Activated B cell treated with CpG ODN at 0.5 μM for 24 hours (primary cell): ENCODE measurements at regions of chr10 and their contacts with region 1.

Region 1: GRCh38 chr10:87861953-87862678 is 1.2 kb downstream of the KLLN start:
- DNase-seq: peak; percentile 93
- ATAC-seq: peak; percentile 68
- H3K4me3 Mint-ChIP-seq: peak overlapping the region; percentile 97
- H3K27ac Mint-ChIP-seq: peak overlapping the region; percentile 98
- H3K4me1 Mint-ChIP-seq: peaks cover 30% of the 10 kb centered on the region
- H3K27me3 Mint-ChIP-seq: no peaks in the 10 kb centered on the region
- CTCF ChIP-seq: no peak

Region 2: DNA sequence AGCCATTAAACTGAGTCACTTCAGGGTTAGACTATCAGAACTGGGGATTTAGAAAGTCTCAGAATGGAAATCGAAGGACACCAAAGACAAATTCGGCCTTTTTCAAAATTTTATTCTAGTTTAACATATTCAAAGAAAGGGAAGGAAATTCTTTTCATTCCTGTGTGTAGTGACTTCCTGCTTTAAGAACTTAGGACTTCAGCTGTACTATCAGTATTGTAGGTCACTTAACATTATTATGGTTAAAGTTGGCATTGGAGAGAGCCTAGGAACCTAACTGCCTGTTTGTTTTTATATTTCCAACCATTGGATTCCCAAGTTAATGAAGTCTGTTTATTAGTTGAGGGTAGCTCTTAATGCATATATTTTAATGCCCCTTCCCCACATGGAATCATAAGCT is 65.0 kb after region 1 on chr10:
- CTCF ChIA-PET with region 1: no interaction called
- POLR2A ChIA-PET with region 1: interaction called, 4 read pairs
- intact Hi-C with region 1: loop called (anchors 2 kb)
- DNase-seq: no peak
- ATAC-seq: no peak
- H3K4me3 Mint-ChIP-seq: no peak overlapping the region
- H3K27ac Mint-ChIP-seq: no peak overlapping the region
- H3K4me1 Mint-ChIP-seq: peaks cover 86% of the 10 kb centered on the region
- H3K27me3 Mint-ChIP-seq: no peaks in the 10 kb centered on the region
- CTCF ChIP-seq: no peak

Region 3: DNA sequence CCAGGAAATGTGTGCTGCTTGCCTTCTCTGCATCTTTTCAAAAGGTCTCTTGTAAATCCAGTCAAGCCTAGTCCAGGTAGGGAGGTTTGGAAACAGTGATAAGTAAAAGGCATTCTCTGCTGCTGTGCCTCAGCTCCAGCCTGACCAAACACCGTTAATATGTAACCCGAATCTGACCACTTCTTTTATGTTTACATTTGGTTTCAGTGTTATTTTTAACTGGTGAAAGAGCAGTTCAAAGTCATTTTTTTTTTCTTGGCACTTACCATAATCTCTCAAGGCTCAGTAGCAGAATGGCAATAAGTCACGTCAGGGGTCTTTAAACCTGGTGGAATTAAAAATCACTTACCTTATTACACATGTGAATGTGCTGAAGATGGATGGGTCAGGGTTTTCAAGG is 218.1 kb after region 1 on chr10:
- CTCF ChIA-PET with region 1: interaction called, 3 read pairs
- POLR2A ChIA-PET with region 1: interaction called, 13 read pairs
- intact Hi-C with region 1: no loop called
- DNase-seq: no peak
- ATAC-seq: no peak
- H3K4me3 Mint-ChIP-seq: peak overlapping the region; percentile 48
- H3K27ac Mint-ChIP-seq: peak overlapping the region; percentile 54
- H3K4me1 Mint-ChIP-seq: peaks cover 62% of the 10 kb centered on the region
- H3K27me3 Mint-ChIP-seq: no peaks in the 10 kb centered on the region
- CTCF ChIP-seq: no peak

Region 4: DNA sequence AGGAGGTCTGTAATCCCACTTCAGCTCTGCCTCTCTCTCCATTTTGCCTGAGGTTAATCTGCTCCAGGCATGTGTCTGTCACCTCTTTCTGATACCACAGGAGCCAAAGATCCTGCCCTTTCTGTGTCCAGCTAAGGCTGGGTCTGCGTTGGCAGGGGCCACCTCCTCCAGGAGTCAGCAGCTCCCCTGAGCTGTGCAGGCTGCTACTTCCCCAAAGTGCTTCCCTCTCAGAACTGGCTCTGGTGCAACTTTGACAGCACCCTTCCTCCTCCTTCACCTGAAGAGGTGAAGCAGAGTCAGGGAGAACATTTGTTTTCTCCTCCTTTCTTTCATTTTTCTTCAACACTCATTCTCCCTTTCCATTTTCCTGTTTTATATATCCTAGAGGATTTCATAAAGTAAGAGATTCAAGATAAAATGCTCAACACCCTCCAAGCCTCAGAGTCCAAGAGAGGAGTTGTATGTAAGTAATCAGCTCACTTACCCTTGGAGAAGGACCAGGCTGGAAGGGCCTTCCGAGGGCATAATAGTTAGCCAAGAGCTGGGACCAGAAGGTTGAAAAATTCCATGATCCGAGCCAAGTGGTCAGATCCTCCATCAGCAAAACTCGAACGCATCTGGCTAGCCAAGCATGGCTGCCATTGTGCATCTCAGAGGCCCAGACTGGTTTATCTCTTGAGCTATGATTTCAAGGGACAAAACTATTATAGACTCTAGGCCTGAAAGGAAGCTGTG is 258.6 kb after region 1 on chr10:
- CTCF ChIA-PET with region 1: interaction called, 14 read pairs
- POLR2A ChIA-PET with region 1: interaction called, 51 read pairs
- intact Hi-C with region 1: no loop called
- DNase-seq: no peak
- ATAC-seq: peak; percentile 53
- H3K4me3 Mint-ChIP-seq: peak overlapping the region; percentile 11
- H3K27ac Mint-ChIP-seq: no peak overlapping the region
- H3K4me1 Mint-ChIP-seq: peaks cover 20% of the 10 kb centered on the region
- H3K27me3 Mint-ChIP-seq: no peaks in the 10 kb centered on the region
- CTCF ChIP-seq: no peak

Region 5: DNA sequence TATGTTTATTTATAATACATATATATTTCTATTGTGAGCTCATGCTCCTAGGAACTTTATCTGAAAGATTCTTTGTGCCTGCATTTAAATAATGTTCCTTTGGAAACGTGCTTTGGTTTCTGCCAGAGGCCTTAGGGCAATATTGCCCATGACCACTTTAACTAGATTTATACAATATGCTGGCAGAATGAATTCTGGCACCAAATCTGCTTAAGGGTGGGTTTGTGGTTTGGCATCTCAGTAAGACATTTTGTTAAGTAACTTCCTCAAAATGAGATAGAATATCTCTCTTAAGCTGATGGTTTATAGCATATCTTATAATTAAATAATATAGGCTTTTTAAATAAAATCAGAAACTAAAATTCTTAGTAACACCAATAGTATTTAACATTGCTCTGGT is 468.1 kb after region 1 on chr10:
- CTCF ChIA-PET with region 1: no interaction called
- POLR2A ChIA-PET with region 1: interaction called, 4 read pairs
- intact Hi-C with region 1: loop called (anchors 5 kb)
- DNase-seq: no peak
- ATAC-seq: no peak
- H3K4me3 Mint-ChIP-seq: no peak overlapping the region
- H3K27ac Mint-ChIP-seq: no peak overlapping the region
- H3K4me1 Mint-ChIP-seq: peaks cover 45% of the 10 kb centered on the region
- H3K27me3 Mint-ChIP-seq: no peaks in the 10 kb centered on the region
- CTCF ChIP-seq: no peak

Region 6: DNA sequence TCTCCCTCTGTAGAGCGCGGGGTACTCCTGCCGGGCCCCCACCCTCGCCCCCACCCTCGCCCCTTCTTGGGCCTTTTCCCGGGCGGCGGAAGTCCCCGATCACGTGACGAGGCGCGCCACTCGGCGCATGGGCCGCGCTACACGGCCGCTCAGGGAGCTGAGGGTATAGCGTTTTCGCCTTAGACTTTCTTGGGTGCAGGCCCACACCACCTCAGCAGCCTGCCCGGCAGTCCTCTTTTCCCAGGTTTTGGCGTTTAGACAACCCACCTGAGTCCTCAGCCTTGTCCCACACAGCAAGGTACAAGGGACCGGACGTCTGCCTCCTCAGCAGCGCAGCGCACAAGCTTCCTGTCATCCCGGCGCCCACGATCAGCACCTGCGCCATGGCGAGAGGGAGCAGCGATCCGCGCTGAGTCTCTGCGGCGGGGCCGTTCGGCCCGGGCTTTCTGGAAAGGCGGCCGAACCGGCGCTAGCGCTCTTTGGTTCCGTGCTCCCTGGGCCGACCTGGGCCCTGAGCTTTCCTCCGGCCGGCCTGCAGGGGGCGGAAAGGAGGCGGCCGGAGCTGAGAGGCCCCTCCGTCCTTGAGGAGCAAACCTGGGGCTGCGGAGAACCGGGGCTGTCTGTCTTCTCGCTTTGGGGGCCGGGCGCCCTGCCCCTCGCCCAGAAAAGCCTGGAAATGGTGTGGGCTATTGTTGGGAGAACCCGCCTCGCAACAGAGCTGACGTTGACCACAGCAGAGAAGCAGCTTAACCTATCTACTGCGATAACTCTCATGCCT is 720.9 kb after region 1 on chr10 and contains the start of gene RNLS:
- CTCF ChIA-PET with region 1: interaction called, 6 read pairs
- POLR2A ChIA-PET with region 1: interaction called, 38 read pairs
- intact Hi-C with region 1: no loop called
- DNase-seq: peak; percentile 72
- ATAC-seq: peak; percentile 88
- H3K4me3 Mint-ChIP-seq: peak within 1 kb of the TSS; percentile 92
- H3K27ac Mint-ChIP-seq: peak within 1 kb of the TSS; percentile 95
- H3K4me1 Mint-ChIP-seq: peaks cover 17% of the 10 kb centered on the region
- H3K27me3 Mint-ChIP-seq: no peaks in the 10 kb centered on the region
- CTCF ChIP-seq: no peak
- total RNA-seq, gene RNLS: 4.9 and 5.7 TPM in 2 replicates